ENCODE measurements at regions of chr5 and their contacts with region 1.

Region 1: GRCh38 chr5:77957931-77958521 is 181.9 kb upstream of the TBCA start:
- DNase-seq: peak in 6 of 42 donors; percentile 7 to 38 (median 28)

Region 2: GRCh38 chr5:77560677-77561263 is 397.3 kb before region 1 on chr5:
- intact Hi-C with region 1: no loop called
- DNase-seq: peak in 9 of 42 donors; percentile 13 to 52 (median 18)

Region 3: GRCh38 chr5:77906806-77907205 is 51.2 kb before region 1 on chr5:
- intact Hi-C with region 1: loop called (anchors 10 kb)
- DNase-seq: no peak

Measured in head of caudate nucleus (tissue), 42 donors.